ENCODE measurements at regions of chr19 and their contacts with region 1.

Region 1: DNA sequence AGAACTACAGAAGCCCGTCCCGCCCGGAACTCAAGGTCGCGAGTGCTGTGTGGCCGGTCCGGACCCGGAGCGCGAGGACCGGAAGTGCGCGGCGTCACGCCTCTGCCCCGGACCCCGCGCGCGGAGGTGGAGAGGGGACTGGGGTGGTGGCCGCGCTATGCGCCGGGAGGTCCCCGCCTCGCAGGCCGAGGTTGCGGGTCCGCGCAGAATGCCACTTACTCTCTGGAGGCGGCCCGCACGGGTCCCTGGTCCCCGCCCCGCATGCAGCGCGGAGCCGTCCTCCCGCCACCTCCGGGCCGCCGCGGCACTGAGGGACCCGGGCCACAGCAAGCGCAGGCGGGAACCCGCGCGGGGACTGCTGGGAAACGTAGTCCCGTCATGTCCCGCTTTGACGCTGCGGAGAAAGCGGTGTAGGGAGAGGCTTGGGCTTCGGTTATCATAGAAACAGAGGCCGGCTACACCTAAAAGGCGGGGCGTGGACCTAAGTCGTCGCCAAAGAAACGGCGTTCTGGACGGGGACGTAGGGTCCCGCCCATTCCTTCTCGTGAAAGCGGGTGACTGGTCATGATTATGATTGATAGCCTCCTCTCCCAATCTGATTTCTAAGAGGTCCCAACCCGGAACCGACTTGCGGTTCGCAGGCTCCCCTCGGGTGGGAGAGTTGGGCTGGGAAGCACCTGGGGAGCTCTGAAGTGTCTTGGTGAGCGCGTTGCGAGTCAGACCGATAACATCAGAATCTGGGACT is at the start of gene ZNF837:
- DNase-seq: peak; percentile 94 to 100 (median 97)
- ATAC-seq: peak; percentile 82
- H3K4me3 ChIP-seq: peak within 1 kb of the TSS; percentile 62 to 92
- H3K4me3 Mint-ChIP-seq: peak within 1 kb of the TSS; percentile 98
- H3K27ac ChIP-seq: peak within 1 kb of the TSS; percentile 90 to 96
- H3K27ac Mint-ChIP-seq: peak within 1 kb of the TSS; percentile 98
- H3K4me1 ChIP-seq: peaks cover 31% of the 10 kb centered on the region
- H3K4me1 Mint-ChIP-seq: peaks cover 35% of the 10 kb centered on the region
- H3K27me3 ChIP-seq: no peaks in the 10 kb centered on the region
- H3K27me3 Mint-ChIP-seq: no peaks in the 10 kb centered on the region
- CTCF ChIP-seq: no peak
- total RNA-seq, gene ZNF837: 1.2 to 1.3 TPM

Region 2: DNA sequence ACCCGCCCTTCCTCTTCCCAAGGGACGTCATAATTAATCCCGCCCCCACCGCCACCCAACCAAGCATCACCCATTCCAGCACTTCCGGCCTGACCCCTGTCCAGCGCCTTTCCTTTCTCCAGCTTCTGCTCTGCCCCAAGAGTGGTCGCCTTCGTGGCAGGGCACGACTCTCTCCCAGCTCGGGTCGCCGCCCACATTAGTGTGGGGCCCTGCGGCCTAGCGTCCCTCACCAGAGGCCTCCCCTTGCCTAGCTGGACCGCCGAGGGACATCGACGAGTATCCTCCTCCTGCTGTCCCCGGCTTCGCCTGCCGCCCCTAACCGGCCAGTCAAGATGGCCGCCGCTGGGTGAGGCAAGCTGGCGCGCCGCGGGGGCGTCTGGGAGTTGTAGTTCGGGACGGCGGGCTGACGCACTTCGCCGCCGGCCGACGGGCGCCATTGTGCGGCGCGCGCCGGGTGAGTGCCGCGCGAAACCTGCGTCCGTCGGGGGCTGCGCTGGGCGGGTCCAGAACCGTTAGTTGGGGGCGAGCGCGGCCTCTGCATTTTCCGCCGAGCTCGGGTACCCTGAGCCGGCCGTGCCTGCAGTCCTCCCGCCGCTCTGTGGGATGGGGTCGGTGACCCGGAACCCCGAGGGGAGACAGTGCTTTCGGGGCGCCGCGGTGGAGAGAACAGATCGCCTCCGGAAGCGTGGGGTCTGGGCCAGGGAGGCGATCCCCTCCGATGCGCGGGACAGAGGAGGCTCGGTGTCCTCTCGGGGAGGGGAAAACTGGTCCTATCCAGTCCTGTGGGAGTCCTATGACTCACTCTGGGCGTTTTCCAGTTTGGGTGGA is 197.7 kb before region 1 on chr19 and contains the start of gene ZNF274:
- CTCF ChIA-PET with region 1: no interaction called
- POLR2A ChIA-PET with region 1: no interaction called
- intact Hi-C with region 1: loop called in 1 of 2 experiments (anchors 1 kb)
- DNase-seq: peak; percentile 88 to 96 (median 94)
- ATAC-seq: peak; percentile 86
- H3K4me3 ChIP-seq: peak within 1 kb of the TSS; percentile 90 to 94
- H3K4me3 Mint-ChIP-seq: peak within 1 kb of the TSS; percentile 91
- H3K27ac ChIP-seq: peak within 1 kb of the TSS; percentile 99 to 100
- H3K27ac Mint-ChIP-seq: peak within 1 kb of the TSS; percentile 100
- H3K4me1 ChIP-seq: peaks cover 9% of the 10 kb centered on the region
- H3K4me1 Mint-ChIP-seq: peaks cover 22% of the 10 kb centered on the region
- H3K27me3 ChIP-seq: no peaks in the 10 kb centered on the region
- H3K27me3 Mint-ChIP-seq: no peaks in the 10 kb centered on the region
- CTCF ChIP-seq: no peak
- total RNA-seq, gene ZNF274: 52.7 to 58.9 TPM

Region 3: DNA sequence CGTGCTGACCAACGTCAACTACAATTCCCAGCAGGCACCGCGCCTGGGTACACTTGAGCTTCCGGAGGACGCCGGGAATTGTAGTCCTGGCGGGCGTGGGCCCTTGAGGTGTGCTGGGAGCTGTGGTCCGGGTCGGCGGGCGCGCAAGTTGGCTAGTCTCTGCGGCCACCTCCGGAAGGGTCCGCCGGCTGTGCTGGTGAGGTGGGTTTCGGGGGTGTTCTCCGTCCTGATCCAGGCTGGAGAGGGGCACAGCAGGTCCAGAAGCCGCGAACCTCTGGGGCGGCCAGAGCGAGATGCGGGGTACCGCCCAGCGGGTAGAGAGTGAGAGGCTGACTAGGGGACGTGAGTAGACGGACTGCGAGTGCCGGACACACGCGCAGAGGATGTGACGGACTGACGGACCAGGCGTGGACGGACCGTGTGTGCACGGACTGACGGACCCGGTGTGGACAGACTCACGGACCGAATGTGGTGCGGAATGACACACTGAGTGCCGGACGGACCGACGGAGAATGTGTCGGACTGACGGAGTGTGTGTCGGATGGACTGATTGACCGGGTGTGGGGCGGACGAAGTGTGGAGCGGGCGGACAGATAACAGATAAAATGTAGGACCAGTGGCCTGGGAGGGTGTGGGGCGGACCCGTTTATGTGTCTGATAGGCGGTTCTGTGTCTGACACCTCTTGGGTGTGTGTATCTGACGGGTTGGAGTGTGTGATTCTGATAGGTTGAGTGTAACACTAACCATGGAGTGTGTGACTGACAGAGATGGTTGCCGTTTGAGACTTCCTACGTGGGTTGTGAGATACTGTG is 53.8 kb before region 1 on chr19 and contains the start of gene ZSCAN22:
- CTCF ChIA-PET with region 1: no interaction called
- POLR2A ChIA-PET with region 1: no interaction called
- intact Hi-C with region 1: loop called (anchors 1 kb)
- DNase-seq: peak; percentile 76 to 94 (median 89)
- ATAC-seq: peak; percentile 78
- H3K4me3 ChIP-seq: peak within 1 kb of the TSS; percentile 84 to 96
- H3K4me3 Mint-ChIP-seq: no peak within 1 kb of the TSS
- H3K27ac ChIP-seq: peak within 1 kb of the TSS; percentile 77 to 96
- H3K27ac Mint-ChIP-seq: no peak within 1 kb of the TSS
- H3K4me1 ChIP-seq: peaks cover 19% of the 10 kb centered on the region
- H3K4me1 Mint-ChIP-seq: peaks cover 3% of the 10 kb centered on the region
- H3K27me3 ChIP-seq: no peaks in the 10 kb centered on the region
- H3K27me3 Mint-ChIP-seq: no peaks in the 10 kb centered on the region
- CTCF ChIP-seq: no peak
- total RNA-seq, gene ZSCAN22: 1.7 to 2.2 TPM

Region 4: GRCh38 chr19:58362272-58362994 is 18.5 kb before region 1 on chr19 and contains the start of gene ZNF497:
- CTCF ChIA-PET with region 1: interaction called, 3 read pairs
- POLR2A ChIA-PET with region 1: interaction called, 14 read pairs
- intact Hi-C with region 1: loop called (anchors 1 kb)
- DNase-seq: peak; percentile 95 to 99 (median 97)
- ATAC-seq: peak; percentile 86
- H3K4me3 ChIP-seq: peak within 1 kb of the TSS; percentile 71 to 78
- H3K4me3 Mint-ChIP-seq: peak within 1 kb of the TSS; percentile 95
- H3K27ac ChIP-seq: peak within 1 kb of the TSS; percentile 82 to 84
- H3K27ac Mint-ChIP-seq: peak within 1 kb of the TSS; percentile 92
- H3K4me1 ChIP-seq: peaks cover 18% of the 10 kb centered on the region
- H3K4me1 Mint-ChIP-seq: peaks cover 23% of the 10 kb centered on the region
- H3K27me3 ChIP-seq: no peaks in the 10 kb centered on the region
- H3K27me3 Mint-ChIP-seq: no peaks in the 10 kb centered on the region
- CTCF ChIP-seq: no peak
- total RNA-seq, gene ZNF497: 0.79 to 1.2 TPM

Region 5: GRCh38 chr19:58451358-58452101 is 70.6 kb after region 1 on chr19 and contains the start of gene ZNF324B:
- CTCF ChIA-PET with region 1: no interaction called
- POLR2A ChIA-PET with region 1: no interaction called
- intact Hi-C with region 1: loop called (anchors 1 kb)
- DNase-seq: peak; percentile 92 to 98 (median 96)
- ATAC-seq: peak; percentile 96
- H3K4me3 ChIP-seq: peak within 1 kb of the TSS; percentile 55 to 83
- H3K4me3 Mint-ChIP-seq: peak within 1 kb of the TSS; percentile 82
- H3K27ac ChIP-seq: peak within 1 kb of the TSS; percentile 44 to 70
- H3K27ac Mint-ChIP-seq: peak within 1 kb of the TSS; percentile 27
- H3K4me1 ChIP-seq: peaks cover 10% of the 10 kb centered on the region
- H3K4me1 Mint-ChIP-seq: peaks cover 16% of the 10 kb centered on the region
- H3K27me3 ChIP-seq: peaks cover 0 to 9% of the 10 kb centered on the region in 2 experiments
- H3K27me3 Mint-ChIP-seq: peaks cover 9% of the 10 kb centered on the region
- CTCF ChIP-seq: no peak
- total RNA-seq, gene ZNF324B: 6.2 to 6.5 TPM

Region 6: GRCh38 chr19:58475714-58476497 is 95.0 kb after region 1 on chr19 and contains the start of gene ZNF446:
- CTCF ChIA-PET with region 1: no interaction called
- POLR2A ChIA-PET with region 1: no interaction called
- intact Hi-C with region 1: loop called (anchors 1 kb)
- DNase-seq: peak; percentile 92 to 99 (median 97)
- ATAC-seq: peak; percentile 82
- H3K4me3 ChIP-seq: peak within 1 kb of the TSS; percentile 56 to 72
- H3K4me3 Mint-ChIP-seq: peak within 1 kb of the TSS; percentile 92
- H3K27ac ChIP-seq: peak within 1 kb of the TSS; percentile 75 to 95
- H3K27ac Mint-ChIP-seq: peak within 1 kb of the TSS; percentile 97
- H3K4me1 ChIP-seq: peaks cover 17% of the 10 kb centered on the region
- H3K4me1 Mint-ChIP-seq: peaks cover 16% of the 10 kb centered on the region
- H3K27me3 ChIP-seq: no peaks in the 10 kb centered on the region
- H3K27me3 Mint-ChIP-seq: no peaks in the 10 kb centered on the region
- CTCF ChIP-seq: no peak
- total RNA-seq, gene ZNF446: 14.6 to 16.5 TPM

Region 7: DNA sequence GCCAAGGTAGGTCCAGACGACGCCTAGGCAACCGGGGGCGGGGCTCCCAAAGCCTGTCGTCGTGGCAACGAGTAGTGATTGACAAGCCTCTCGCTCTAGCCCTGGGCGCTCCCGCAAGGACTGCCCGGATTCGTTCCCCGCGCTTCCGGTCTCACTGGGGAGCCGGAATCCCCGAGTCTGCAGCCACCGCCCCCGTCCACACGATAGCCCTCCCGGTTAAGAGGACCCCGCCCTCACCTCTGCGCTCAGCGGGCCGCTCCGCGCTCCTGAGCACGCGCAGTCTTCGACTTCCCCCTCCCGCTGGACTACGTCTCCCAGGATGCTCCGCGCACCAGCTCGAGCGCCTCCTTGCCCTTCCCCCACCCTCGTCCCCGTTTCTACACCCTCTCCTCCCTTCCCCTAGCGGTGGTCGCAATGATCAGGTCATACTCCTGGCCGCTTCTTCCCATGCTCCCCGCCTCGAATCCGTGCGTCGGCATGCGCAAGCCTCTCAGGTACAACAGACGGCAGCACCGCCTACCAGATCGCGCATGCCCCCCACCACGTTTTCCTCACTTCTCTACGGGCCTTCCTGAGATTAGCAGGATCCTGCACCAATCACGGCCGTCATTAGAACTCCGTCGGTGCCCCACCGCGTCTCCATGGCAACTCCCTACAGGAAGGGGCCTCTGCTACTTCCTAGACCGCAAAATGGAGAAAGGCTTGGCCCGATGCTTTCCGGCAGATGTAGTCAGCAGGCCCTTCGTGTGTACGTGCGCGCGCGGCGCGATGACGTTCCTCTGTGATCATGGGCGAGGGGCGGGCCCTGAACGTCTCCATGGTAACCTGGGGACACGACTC is 192.1 kb after region 1 on chr19 and contains the start of gene MZF1:
- CTCF ChIA-PET with region 1: no interaction called
- POLR2A ChIA-PET with region 1: no interaction called
- intact Hi-C with region 1: loop called in 1 of 2 experiments (anchors 1 kb)
- DNase-seq: peak; percentile 99 to 100 (median 99)
- ATAC-seq: peak; percentile 70
- H3K4me3 ChIP-seq: peak within 1 kb of the TSS; percentile 83 to 84
- H3K4me3 Mint-ChIP-seq: peak within 1 kb of the TSS; percentile 98
- H3K27ac ChIP-seq: peak within 1 kb of the TSS; percentile 98 to 100
- H3K27ac Mint-ChIP-seq: peak within 1 kb of the TSS; percentile 99
- H3K4me1 ChIP-seq: peaks cover 22% of the 10 kb centered on the region
- H3K4me1 Mint-ChIP-seq: peaks cover 30% of the 10 kb centered on the region
- H3K27me3 ChIP-seq: no peaks in the 10 kb centered on the region
- H3K27me3 Mint-ChIP-seq: no peaks in the 10 kb centered on the region
- CTCF ChIP-seq: no peak
- total RNA-seq, gene MZF1: 14.1 to 15.0 TPM